ENCODE measurements at regions of chr2 and their contacts with region 1.

Region 1: GRCh38 chr2:134118279-134119116 is 135.4 kb upstream of the MGAT5 start:
- DNase-seq: peak; percentile 82
- H3K27ac ChIP-seq: no peak overlapping the region
- CTCF ChIP-seq: peak; percentile 83

Region 2: GRCh38 chr2:134207564-134208209 is 89.2 kb after region 1 on chr2:
- CTCF ChIA-PET with region 1: interaction called, 17 read pairs
- POLR2A ChIA-PET with region 1: interaction called, 3 read pairs
- DNase-seq: peak; percentile 40
- H3K27ac ChIP-seq: no peak overlapping the region
- CTCF ChIP-seq: peak; percentile 35

Region 3: GRCh38 chr2:134245340-134245984 is 127.0 kb after region 1 on chr2:
- CTCF ChIA-PET with region 1: interaction called, 23 read pairs
- POLR2A ChIA-PET with region 1: no interaction called
- DNase-seq: peak; percentile 36
- H3K27ac ChIP-seq: no peak overlapping the region
- CTCF ChIP-seq: peak; percentile 81

Region 4: DNA sequence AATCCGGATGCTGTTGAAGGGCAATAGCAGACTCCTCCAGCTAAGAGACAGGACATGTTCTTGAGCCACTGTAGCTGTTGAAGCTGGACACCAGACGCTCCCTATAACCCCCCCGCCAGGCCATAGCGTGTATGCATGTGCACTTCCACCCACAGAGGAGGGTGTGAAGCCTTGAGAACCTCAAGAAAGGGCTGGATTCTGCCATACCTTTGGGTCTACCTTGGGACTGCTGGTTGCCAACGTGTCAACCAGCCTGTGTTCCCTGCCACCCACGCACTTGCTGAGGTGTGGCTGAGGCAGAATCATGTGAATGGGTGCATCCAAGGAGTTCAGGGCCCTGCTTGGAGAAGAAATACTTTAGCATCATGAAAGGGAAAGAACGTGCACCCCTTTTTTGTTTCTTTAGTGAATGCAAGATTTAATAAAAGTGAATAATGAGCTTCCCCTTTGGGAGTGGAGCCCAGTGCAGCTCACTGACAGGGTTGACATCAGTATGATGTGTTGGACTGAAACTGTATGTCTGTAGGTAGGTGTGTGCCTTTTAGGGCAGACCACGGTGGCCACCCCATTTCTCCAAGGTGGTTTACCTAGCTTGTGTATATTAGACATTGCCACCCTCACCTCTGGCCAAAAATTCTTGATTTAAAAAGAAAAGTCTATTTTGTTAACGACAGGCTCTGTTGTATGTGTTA is 333.7 kb after region 1 on chr2:
- CTCF ChIA-PET with region 1: interaction called, 10 read pairs
- POLR2A ChIA-PET with region 1: no interaction called
- DNase-seq: no peak
- H3K27ac ChIP-seq: no peak overlapping the region
- CTCF ChIP-seq: no peak

Measured in RWPE1 (cell line).